Caco-2 (cell line): ENCODE measurements at regions of chr7 and their contacts with region 1.

Region 1: GRCh38 chr7:65037740-65038678 is 31.5 kb upstream of the ERV3-1 start:
- DNase-seq: peak; percentile 94
- H3K4me3 ChIP-seq: peak overlapping the region; percentile 83
- H3K4me3 Mint-ChIP-seq: peak overlapping the region; percentile 89
- H3K27ac Mint-ChIP-seq: peak overlapping the region; percentile 57
- H3K4me1 ChIP-seq: 0 out of 2 replicates have a peak, but pooled peaks cover 3% of the 10 kb centered on the region
- H3K4me1 Mint-ChIP-seq: no peaks in the 10 kb centered on the region
- H3K27me3 ChIP-seq: no peaks in the 10 kb centered on the region
- H3K27me3 Mint-ChIP-seq: no peaks in the 10 kb centered on the region
- CTCF ChIP-seq: no peak

Region 2: DNA sequence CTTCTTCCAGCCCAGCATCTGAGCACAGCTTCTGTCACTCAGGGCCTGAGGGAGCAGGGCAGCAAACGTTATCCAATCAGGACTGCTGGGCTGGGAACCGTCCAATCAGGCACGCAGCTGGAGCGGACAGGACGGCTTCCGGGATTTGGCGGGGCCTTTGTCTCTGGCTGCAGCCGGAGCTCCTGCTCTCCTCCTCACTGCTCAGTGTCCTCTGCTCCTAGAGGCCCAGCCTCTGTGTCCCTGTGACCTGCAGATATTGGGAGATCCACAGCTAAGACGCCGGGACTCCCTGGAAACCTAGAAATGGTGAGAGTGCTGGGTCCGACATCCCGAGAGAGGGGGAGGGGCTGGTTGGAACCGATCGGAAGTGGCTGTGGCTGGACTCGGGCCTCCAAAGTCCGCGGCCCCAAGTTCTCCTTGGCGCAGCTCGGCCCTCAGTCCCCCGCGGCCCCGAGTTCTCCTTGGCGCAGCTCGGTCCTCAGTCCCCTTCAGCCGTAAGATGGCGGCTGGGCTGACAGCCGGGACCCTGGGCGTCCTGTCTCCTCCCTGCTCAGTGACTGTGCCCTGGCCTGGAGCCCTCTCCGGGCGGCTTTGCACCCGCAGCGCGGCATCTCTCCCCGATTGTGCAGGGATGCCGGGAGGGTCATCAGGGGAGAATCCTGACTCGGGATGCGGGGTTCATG is 371.9 kb before region 1 on chr7 and contains the start of gene ZNF107:
- CTCF ChIA-PET with region 1: no interaction called
- POLR2A ChIA-PET with region 1: no interaction called
- intact Hi-C with region 1: loop called (anchors 1 kb)
- DNase-seq: peak; percentile 93 to 97
- H3K4me3 ChIP-seq: peak within 1 kb of the TSS; percentile 70
- H3K4me3 Mint-ChIP-seq: peak within 1 kb of the TSS; percentile 94
- H3K27ac Mint-ChIP-seq: peak within 1 kb of the TSS; percentile 95
- H3K4me1 ChIP-seq: peaks cover 10% of the 10 kb centered on the region; the same call in 1 of the 2 replicates
- H3K4me1 Mint-ChIP-seq: peaks cover 16% of the 10 kb centered on the region
- H3K27me3 ChIP-seq: no peaks in the 10 kb centered on the region
- H3K27me3 Mint-ChIP-seq: no peaks in the 10 kb centered on the region
- CTCF ChIP-seq: no peak
- total RNA-seq, gene ZNF107: 12.0 and 13.0 TPM in 2 replicates

Region 3: DNA sequence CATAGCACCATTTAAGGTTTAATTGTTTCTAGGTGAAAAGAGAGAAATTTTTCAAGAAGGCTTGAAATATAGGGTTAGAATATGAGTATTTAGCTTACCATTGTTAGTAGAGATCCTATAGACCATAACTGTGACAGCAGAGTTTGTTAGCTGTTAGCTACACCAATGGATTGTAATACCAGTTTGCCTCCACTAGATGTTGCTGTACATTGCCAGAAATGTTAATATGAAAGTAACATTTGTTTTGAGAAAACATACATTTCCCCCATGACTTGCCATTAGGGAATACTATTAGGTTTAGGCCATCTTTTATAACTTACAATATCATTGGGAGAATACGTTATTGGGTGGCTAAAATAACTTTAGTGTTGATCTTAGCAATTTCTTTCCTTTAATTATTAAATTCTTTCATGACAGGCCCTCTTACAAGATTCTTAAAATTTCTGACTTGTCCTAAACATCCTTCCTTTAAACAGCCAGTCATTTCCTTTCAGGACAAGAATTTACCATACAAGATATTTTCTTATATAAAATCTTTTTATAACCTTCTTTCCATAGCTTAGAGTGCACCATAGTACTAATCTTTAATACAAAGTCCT is 86.7 kb before region 1 on chr7:
- CTCF ChIA-PET with region 1: interaction called, 4 read pairs
- POLR2A ChIA-PET with region 1: no interaction called
- intact Hi-C with region 1: loop called (anchors 10 kb)
- DNase-seq: peak in 1 of 2 experiments; percentile 34
- H3K4me3 ChIP-seq: no peak overlapping the region
- H3K4me3 Mint-ChIP-seq: no peak overlapping the region
- H3K27ac Mint-ChIP-seq: no peak overlapping the region
- H3K4me1 ChIP-seq: no peaks in the 10 kb centered on the region
- H3K4me1 Mint-ChIP-seq: no peaks in the 10 kb centered on the region
- H3K27me3 ChIP-seq: no peaks in the 10 kb centered on the region
- H3K27me3 Mint-ChIP-seq: no peaks in the 10 kb centered on the region
- CTCF ChIP-seq: peak; percentile 56 to 69

Region 4: GRCh38 chr7:64999165-65000004 is 38.6 kb before region 1 on chr7:
- CTCF ChIA-PET with region 1: no interaction called
- POLR2A ChIA-PET with region 1: no interaction called
- intact Hi-C with region 1: loop called (anchors 2 kb)
- DNase-seq: peak; percentile 65 to 75
- H3K4me3 ChIP-seq: no peak overlapping the region
- H3K4me3 Mint-ChIP-seq: peak overlapping the region; percentile 57
- H3K27ac Mint-ChIP-seq: peak overlapping the region; percentile 79
- H3K4me1 ChIP-seq: peaks cover 32% of the 10 kb centered on the region
- H3K4me1 Mint-ChIP-seq: peaks cover 17% of the 10 kb centered on the region
- H3K27me3 ChIP-seq: no peaks in the 10 kb centered on the region
- H3K27me3 Mint-ChIP-seq: no peaks in the 10 kb centered on the region
- CTCF ChIP-seq: no peak

Region 5: DNA sequence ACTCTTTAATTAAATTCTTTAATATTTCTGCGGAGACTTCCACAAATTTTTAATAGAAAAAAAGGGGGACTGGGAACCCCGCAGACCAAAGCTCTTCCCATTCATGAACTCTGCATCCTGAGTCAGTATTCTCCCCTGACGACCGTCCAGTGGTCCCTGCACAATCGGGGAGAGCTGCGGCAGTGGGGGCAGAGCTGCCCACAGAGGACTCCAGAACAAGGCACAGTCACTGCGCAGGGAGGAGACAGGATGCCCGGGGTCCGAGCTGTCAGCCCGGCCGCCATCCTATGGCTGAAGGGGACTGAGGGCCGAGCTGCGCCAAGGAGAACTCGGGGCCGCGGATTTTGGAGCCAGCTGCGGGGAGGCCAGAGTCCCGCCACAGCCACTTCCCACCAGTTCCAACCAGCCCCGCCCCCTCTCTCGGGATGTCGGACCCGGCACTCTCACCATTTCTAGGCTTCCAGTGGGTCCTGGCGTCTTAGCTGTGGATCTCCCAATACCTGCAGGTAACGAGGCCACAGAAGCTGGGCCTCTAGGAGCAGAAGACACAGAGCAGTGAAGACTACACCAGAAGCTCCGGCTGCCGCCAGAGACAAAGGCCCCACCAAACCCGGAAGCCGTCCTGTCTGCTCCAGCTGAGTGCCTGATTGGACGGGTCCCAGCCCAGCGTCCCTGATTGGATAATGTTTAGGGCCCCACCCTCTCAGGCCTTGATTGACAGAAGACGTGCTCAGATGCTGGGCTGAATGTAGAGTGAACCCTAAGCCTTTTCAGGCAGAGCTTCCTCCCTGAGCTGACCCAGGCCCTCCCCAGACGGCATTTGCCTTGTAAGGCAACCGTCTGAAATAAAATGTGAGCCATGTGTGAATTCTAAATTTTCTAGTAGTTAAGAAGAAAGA is 31.7 kb before region 1 on chr7 and contains the start of gene ERV3-1:
- CTCF ChIA-PET with region 1: interaction called, 3 read pairs
- POLR2A ChIA-PET with region 1: interaction called, 13 read pairs
- intact Hi-C with region 1: loop called (anchors 1 kb)
- DNase-seq: peak; percentile 94 to 97
- H3K4me3 ChIP-seq: peak within 1 kb of the TSS; percentile 69
- H3K4me3 Mint-ChIP-seq: peak within 1 kb of the TSS; percentile 93
- H3K27ac Mint-ChIP-seq: peak within 1 kb of the TSS; percentile 95
- H3K4me1 ChIP-seq: peaks cover 4% of the 10 kb centered on the region
- H3K4me1 Mint-ChIP-seq: peaks cover 14% of the 10 kb centered on the region
- H3K27me3 ChIP-seq: no peaks in the 10 kb centered on the region
- H3K27me3 Mint-ChIP-seq: no peaks in the 10 kb centered on the region
- CTCF ChIP-seq: no peak
- total RNA-seq, gene ERV3-1: 10.9 and 13.5 TPM in 2 replicates